Body of pancreas (tissue), 4 donors: ENCODE measurements at regions of chr6 and their contacts with region 1.

Region 1: DNA sequence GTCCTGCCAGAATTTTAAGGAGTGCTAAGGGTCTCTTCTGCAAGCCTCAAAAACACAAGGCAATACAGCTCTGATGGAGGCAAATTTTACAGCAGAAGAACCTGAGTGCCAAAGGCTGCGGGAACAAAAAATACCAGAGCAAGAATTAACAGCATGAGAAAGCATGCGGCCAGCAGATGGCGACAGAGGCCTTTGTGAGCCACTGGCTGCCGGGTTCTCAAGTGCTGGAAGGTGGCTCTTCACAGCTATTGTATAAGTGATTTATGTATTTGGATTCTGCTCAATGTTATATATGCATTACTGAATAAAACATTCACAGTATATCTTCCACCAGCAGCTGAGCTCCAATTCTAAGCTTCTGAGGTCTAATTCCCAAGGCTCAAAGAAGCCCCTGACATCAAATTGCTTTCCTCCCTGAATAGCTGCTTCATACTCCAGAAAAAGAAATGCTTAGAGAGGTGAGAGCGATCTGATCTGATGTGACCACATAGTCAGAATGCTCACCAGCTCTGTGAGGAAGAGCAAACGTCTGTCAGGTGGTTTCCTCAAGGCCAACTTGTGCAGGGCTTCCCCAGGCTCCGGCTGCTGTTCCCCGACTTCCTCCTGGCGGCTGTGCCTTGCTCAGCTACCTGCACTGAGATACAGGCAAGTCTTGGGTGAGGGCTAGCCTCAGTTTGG is 58.6 kb downstream of the PPP1R3G start:
- DNase-seq: peak; percentile 84 to 92 (median 86)
- ATAC-seq: peak; percentile 73
- H3K4me3 ChIP-seq: no peak overlapping the region
- H3K27ac ChIP-seq: no peak overlapping the region
- H3K4me1 ChIP-seq: no peaks in the 10 kb centered on the region
- H3K27me3 ChIP-seq: no peaks in the 10 kb centered on the region
- CTCF ChIP-seq: peak; percentile 70 to 89 (median 84)
- POLR2A ChIP-seq: no peak

Region 2: GRCh38 chr6:5096482-5096881 is 47.3 kb before region 1 on chr6:
- intact Hi-C with region 1: no loop called
- DNase-seq: no peak
- ATAC-seq: no peak
- H3K4me3 ChIP-seq: no peak overlapping the region
- H3K27ac ChIP-seq: no peak overlapping the region
- H3K4me1 ChIP-seq: no peaks in the 10 kb centered on the region
- H3K27me3 ChIP-seq: no peaks in the 10 kb centered on the region
- CTCF ChIP-seq: no peak
- POLR2A ChIP-seq: no peak

Region 3: GRCh38 chr6:5302995-5303622 is 159.3 kb after region 1 on chr6:
- intact Hi-C with region 1: loop called (anchors 5 kb)
- DNase-seq: peak; percentile 68 to 79 (median 74)
- ATAC-seq: peak; percentile 83
- H3K4me3 ChIP-seq: no peak overlapping the region
- H3K27ac ChIP-seq: no peak overlapping the region
- H3K4me1 ChIP-seq: peaks cover 15% of the 10 kb centered on the region
- H3K27me3 ChIP-seq: no peaks in the 10 kb centered on the region
- CTCF ChIP-seq: peak; percentile 48 to 72 (median 66)
- POLR2A ChIP-seq: no peak

Region 4: GRCh38 chr6:6547110-6547879 is 1403.5 kb after region 1 on chr6:
- intact Hi-C with region 1: loop called (anchors 5 kb)
- DNase-seq: peak; percentile 89 to 91 (median 90)
- ATAC-seq: peak; percentile 96
- H3K4me3 ChIP-seq: no peak overlapping the region
- H3K27ac ChIP-seq: no peak overlapping the region
- H3K4me1 ChIP-seq: peaks cover 14% of the 10 kb centered on the region
- H3K27me3 ChIP-seq: peaks cover 0 to 7% of the 10 kb centered on the region in 2 donors
- CTCF ChIP-seq: peak; percentile 86 to 96 (median 94)
- POLR2A ChIP-seq: no peak